Vagina (tissue), 2 donors: ENCODE measurements at regions of chr3 and their contacts with region 1.

Region 1: DNA sequence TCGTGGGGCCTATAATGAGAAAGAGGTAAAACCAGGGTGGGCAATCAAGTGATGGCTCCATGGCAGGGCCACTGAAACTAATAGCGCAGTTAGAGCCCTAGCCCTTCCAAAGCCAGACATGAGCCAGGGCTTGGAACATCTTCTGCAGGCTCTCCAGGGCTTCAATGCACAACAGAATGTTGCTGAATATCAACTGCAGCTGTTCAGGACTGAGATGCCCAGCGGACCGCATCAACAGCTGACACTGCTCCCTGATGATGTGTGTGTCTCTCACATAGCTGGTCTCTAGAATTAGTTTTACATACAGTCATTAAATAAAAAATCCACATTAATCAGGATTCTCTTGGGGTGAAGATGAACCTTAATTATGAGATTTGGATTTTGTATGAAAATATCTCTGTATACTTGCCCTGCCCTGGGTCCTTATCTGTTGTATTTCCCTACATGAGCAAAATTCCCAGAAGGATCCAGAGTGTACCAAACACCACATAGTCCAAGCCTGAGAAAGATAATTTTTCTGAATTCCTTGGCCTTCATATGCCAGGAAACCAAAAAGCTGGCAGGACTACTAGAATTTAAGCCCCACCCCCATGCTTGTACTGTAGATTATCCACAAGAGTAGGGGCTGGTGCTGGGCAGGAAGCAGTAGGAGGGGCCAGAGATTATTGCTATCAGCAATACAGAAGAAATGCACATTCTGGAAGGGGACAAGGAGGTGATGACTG is 7.7 kb upstream of the GOLGB1 start:
- DNase-seq: no peak
- H3K4me3 ChIP-seq: no peak overlapping the region
- H3K27ac ChIP-seq: no peak overlapping the region
- H3K4me1 ChIP-seq: no peaks in the 10 kb centered on the region
- H3K27me3 ChIP-seq: no peaks in the 10 kb centered on the region
- CTCF ChIP-seq: no peak
- POLR2A ChIP-seq: no peak

Region 2: DNA sequence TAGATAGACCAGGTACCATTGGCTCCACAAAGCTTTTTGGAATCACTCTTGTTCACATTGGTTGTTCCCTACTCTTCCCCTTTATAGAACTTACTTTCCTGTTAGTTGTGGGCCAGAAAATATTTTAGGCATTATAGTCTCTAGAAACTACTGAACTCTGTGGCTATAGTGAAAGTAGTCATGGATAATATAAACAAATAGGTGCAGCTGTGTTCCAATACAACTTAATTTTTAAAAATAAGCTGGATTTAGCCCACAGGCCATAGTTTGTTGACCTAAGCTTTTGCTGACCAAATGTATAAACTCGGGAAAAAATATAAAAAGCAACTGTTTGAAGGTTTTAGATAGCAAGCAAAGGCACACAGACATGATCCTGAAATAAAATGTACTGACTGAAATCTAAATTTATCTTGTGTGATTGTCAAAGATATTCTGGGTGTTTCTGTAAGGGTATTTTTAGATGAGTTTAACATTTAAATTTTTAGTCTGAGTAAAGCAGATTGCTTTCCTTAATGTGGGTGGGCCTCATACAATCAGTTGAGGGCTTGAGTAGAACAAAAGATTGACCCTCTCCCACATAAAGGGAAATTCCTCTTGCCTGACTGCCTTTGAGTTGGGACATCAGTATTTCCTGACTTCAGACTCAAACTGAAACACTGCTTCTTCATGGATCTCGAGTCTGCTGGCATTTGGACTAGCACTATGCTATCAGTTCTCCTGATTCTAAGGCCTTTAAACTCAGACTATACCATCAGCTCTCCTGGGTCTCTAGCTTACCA is 64.4 kb after region 1 on chr3:
- intact Hi-C with region 1: loop called (anchors 5 kb)
- DNase-seq: no peak
- H3K4me3 ChIP-seq: no peak overlapping the region
- H3K27ac ChIP-seq: no peak overlapping the region
- H3K4me1 ChIP-seq: no peaks in the 10 kb centered on the region
- H3K27me3 ChIP-seq: no peaks in the 10 kb centered on the region
- CTCF ChIP-seq: no peak
- POLR2A ChIP-seq: no peak